CD4-positive, alpha-beta T cell (primary cell): ENCODE measurements at regions of chr4 and their contacts with region 1.

Region 1: GRCh38 chr4:10237131-10237530 is 120.5 kb upstream of the WDR1 start:
- DNase-seq: peak in 1 of 14 experiments; percentile 0
- ATAC-seq: no peak
- H3K4me3 ChIP-seq: no peak overlapping the region
- H3K4me3 Mint-ChIP-seq: no peak overlapping the region
- H3K27ac ChIP-seq: no peak overlapping the region
- H3K27ac Mint-ChIP-seq: no peak overlapping the region
- H3K4me1 ChIP-seq: no peaks in the 10 kb centered on the region
- H3K4me1 Mint-ChIP-seq: no peaks in the 10 kb centered on the region
- H3K27me3 ChIP-seq: no peaks in the 10 kb centered on the region
- H3K27me3 Mint-ChIP-seq: peaks cover 3% of the 10 kb centered on the region
- CTCF ChIP-seq: no peak

Region 2: GRCh38 chr4:10204401-10205058 is 32.6 kb before region 1 on chr4:
- CTCF ChIA-PET with region 1: no interaction called
- POLR2A ChIA-PET with region 1: no interaction called
- intact Hi-C with region 1: loop called (anchors 1 kb)
- DNase-seq: peak in 1 of 14 experiments; percentile 0
- ATAC-seq: no peak
- H3K4me3 ChIP-seq: no peak overlapping the region
- H3K4me3 Mint-ChIP-seq: no peak overlapping the region
- H3K27ac ChIP-seq: no peak overlapping the region
- H3K27ac Mint-ChIP-seq: no peak overlapping the region
- H3K4me1 ChIP-seq: no peaks in the 10 kb centered on the region
- H3K4me1 Mint-ChIP-seq: no peaks in the 10 kb centered on the region
- H3K27me3 ChIP-seq: no peaks in the 10 kb centered on the region
- H3K27me3 Mint-ChIP-seq: no peaks in the 10 kb centered on the region
- CTCF ChIP-seq: no peak